ENCODE measurements at regions of chr5 and their contacts with region 1.

Region 1: GRCh38 chr5:154857530-154858296 is 714 bp upstream of the CNOT8 start:
- DNase-seq: peak; percentile 88 to 94
- H3K4me3 ChIP-seq: peak overlapping the region; percentile 88
- H3K27ac ChIP-seq: peak overlapping the region; percentile 84
- H3K4me1 ChIP-seq: peaks cover 24% of the 10 kb centered on the region
- H3K27me3 ChIP-seq: no peaks in the 10 kb centered on the region
- CTCF ChIP-seq: no peak

Region 2: DNA sequence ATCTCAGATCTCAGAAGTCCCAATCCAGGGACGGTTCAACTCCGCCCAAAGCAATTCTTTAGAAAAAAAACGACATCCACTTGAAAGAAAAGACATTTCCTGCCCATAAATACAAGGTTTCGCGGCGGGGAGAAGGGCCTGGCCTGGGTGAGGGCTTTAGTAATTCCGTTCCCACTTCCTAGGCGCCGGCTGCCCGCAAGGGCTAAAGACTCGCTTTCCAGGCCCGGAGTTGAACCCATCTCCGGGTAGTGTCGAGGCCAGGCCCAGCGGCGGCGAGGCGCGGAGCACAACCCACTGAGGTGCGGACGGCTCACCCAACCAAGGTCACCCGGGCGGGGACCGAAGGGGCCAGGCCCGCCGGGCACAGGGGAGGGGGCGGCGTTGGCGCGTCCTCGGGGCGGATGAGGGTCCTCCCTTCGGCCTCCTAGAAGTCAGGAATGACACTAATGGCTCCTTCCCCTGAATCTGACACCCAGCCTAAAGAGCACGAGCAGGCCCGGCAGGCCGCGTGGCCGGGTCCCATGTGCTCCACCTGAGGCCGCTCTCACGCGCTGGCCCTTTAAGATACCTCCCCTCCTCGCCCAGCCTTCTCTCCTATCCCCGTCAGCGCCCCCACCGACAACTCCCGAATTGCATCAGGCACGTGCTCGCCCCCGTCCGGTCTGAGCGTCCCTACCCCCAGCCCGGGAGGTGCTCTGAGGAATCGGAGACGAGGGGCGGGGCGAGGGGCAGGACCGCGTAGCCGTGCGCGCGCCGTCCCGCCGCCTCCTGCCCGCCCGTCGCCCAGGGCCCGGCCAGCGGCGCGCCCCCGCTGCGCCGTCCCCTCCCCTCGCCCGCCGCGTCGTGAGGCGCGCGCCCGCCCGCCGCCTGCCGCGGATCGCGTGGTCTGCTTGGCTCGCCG is 103.0 kb before region 1 on chr5:
- CTCF ChIA-PET with region 1: no interaction called
- POLR2A ChIA-PET with region 1: no interaction called
- intact Hi-C with region 1: loop called (anchors 1 kb)
- DNase-seq: peak; percentile 96 to 100
- H3K4me3 ChIP-seq: peak overlapping the region; percentile 77
- H3K27ac ChIP-seq: peak overlapping the region; percentile 95
- H3K4me1 ChIP-seq: peaks cover 33% of the 10 kb centered on the region
- H3K27me3 ChIP-seq: no peaks in the 10 kb centered on the region
- CTCF ChIP-seq: no peak; the same call in 1 of the 2 replicates

Region 3: GRCh38 chr5:154829589-154830218 is 28.0 kb before region 1 on chr5:
- CTCF ChIA-PET with region 1: no interaction called
- POLR2A ChIA-PET with region 1: interaction called, 16 read pairs
- intact Hi-C with region 1: loop called (anchors 1 kb)
- DNase-seq: peak; percentile 76 to 88
- H3K4me3 ChIP-seq: no peak overlapping the region
- H3K27ac ChIP-seq: peak overlapping the region; percentile 74
- H3K4me1 ChIP-seq: peaks cover 47% of the 10 kb centered on the region
- H3K27me3 ChIP-seq: no peaks in the 10 kb centered on the region
- CTCF ChIP-seq: no peak

Measured in PC-9 (cell line).